MCF 10A (cell line): ENCODE measurements at regions of chr9 and their contacts with region 1.

Region 1: GRCh38 chr9:80175286-80176150 is 603.8 kb downstream of the TLE4 start:
- DNase-seq: peak; percentile 43
- H3K4me3 Mint-ChIP-seq: no peak overlapping the region
- H3K27ac Mint-ChIP-seq: no peak overlapping the region
- H3K4me1 Mint-ChIP-seq: no peaks in the 10 kb centered on the region
- H3K27me3 Mint-ChIP-seq: no peaks in the 10 kb centered on the region
- CTCF ChIP-seq: peak; percentile 77

Region 2: DNA sequence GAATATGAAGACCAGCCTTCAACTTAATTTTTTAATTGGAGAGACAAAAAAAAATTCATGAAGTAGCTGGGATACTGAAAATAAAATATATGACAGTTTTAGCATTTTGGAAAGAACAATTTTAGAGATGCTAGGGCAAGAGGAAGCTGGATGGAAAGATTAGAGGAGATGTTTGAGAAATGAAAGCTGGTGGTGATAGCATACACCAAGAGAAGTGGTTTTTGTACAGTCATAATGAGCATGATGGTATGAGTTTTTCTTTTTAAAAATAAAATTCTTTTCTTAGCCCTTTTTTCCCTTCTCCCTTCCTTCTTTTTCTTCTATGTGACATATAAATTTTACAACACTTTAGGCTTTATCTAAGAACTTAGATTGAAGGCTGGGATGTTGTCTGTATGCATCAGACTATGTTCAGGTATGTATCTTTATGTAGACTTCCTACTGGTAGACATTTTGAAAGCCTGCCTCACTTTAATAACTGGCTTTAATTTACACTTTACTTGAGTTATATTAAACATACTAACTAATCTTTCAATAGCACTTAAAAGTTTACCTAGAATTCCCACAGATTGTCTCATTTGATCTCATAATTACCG is 81.2 kb before region 1 on chr9:
- CTCF ChIA-PET with region 1: no interaction called
- POLR2A ChIA-PET with region 1: no interaction called
- intact Hi-C with region 1: no loop called
- DNase-seq: no peak
- H3K4me3 Mint-ChIP-seq: no peak overlapping the region
- H3K27ac Mint-ChIP-seq: no peak overlapping the region
- H3K4me1 Mint-ChIP-seq: no peaks in the 10 kb centered on the region
- H3K27me3 Mint-ChIP-seq: no peaks in the 10 kb centered on the region
- CTCF ChIP-seq: no peak

Region 3: DNA sequence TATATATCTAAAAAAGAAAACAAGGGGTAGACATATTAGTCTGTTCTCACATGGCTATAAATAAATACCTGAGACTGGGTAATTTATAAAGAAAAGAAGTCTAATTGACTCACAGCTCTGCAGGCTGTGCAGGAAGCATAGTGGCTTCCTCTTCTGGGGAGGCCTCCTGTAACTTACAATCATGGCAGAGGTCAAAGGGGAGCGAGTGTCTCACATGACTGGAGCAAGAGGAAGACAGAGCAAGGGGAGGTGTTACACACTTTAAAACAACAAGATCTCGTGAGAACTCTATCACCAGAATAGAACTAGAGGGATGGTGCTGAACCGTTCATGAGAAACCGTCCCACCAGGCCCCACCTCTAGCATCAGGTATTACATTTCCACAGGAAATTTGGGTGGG is 13.1 kb after region 1 on chr9:
- CTCF ChIA-PET with region 1: interaction called, 14 read pairs
- POLR2A ChIA-PET with region 1: no interaction called
- intact Hi-C with region 1: no loop called
- DNase-seq: no peak
- H3K4me3 Mint-ChIP-seq: no peak overlapping the region
- H3K27ac Mint-ChIP-seq: no peak overlapping the region
- H3K4me1 Mint-ChIP-seq: no peaks in the 10 kb centered on the region
- H3K27me3 Mint-ChIP-seq: no peaks in the 10 kb centered on the region
- CTCF ChIP-seq: no peak

Region 4: GRCh38 chr9:80503671-80504281 is 328.3 kb after region 1 on chr9:
- CTCF ChIA-PET with region 1: interaction called, 6 read pairs
- POLR2A ChIA-PET with region 1: no interaction called
- intact Hi-C with region 1: loop called (anchors 10 kb)
- DNase-seq: no peak
- H3K4me3 Mint-ChIP-seq: no peak overlapping the region
- H3K27ac Mint-ChIP-seq: no peak overlapping the region
- H3K4me1 Mint-ChIP-seq: peaks cover 9% of the 10 kb centered on the region
- H3K27me3 Mint-ChIP-seq: no peaks in the 10 kb centered on the region
- CTCF ChIP-seq: no peak

Region 5: DNA sequence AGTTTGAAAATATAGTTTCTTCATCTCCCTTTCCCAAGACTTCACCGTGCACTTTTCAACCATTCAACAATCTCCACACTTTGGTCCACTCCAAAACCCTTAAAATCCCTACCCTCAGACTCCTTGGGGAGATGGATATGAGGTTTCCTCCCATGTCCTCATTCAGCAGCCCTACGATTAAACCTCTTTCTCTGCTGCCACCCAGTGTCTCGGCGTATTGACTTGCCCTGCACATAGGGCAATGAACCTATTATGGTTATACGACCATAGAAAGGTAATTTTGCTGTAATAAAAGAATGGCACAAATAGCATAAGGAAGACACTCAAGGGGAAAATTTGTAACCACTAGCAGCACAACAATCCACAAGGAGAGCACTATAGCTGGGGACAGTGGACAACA is 710.4 kb after region 1 on chr9:
- CTCF ChIA-PET with region 1: no interaction called
- POLR2A ChIA-PET with region 1: no interaction called
- intact Hi-C with region 1: loop called (anchors 5 kb)
- DNase-seq: peak; percentile 40
- H3K4me3 Mint-ChIP-seq: no peak overlapping the region
- H3K27ac Mint-ChIP-seq: no peak overlapping the region
- H3K4me1 Mint-ChIP-seq: no peaks in the 10 kb centered on the region
- H3K27me3 Mint-ChIP-seq: no peaks in the 10 kb centered on the region
- CTCF ChIP-seq: no peak